Endothelial cell of umbilical vein (primary cell): ENCODE measurements at regions of chr2 and their contacts with region 1.

Region 1: DNA sequence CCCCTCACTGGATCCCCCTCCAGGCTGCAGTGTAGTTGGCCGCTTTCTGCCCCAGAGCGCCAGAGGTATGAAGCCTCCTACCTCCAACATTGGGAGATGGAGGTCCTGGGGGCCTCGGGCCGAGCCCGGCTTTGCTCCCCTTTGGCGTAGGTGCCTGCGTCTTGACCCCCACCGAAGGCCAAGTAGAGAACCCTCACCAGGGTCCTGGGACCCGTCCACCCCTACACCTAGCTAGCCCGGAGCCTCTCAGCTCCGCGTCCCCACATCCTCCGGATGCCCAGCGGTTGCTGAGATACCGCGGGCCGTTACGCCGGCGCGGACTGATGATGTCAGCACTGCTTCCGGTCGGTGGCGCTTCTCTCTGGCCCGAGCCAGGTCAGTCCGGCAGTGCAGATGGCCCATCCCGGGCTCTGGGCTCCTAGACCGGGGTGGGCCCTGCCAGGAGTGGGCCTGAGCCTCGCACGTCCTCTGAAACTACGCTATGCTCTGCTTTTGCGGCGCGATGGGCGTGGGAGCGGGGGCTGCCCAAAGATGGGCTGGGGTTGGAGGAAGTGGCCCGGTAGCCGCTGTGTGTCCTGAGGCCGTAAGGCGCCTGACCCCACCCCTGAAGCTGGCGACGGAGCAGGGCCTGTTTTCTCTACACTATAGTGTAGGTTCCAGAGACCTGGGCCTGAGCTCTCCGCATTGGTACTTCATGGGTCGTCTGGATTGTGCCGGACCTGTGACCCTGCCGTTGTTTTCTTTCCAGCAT is at the starts of genes GLB1L and STK16:
- DNase-seq: peak; percentile 91
- H3K4me3 ChIP-seq: peak within 1 kb of the TSS; percentile 67 to 80 (median 67)
- H3K27ac ChIP-seq: peak within 1 kb of the TSS; percentile 92
- H3K4me1 ChIP-seq: peaks cover 28% of the 10 kb centered on the region
- H3K27me3 ChIP-seq: no peaks in the 10 kb centered on the region
- CTCF ChIP-seq: no peak
- POLR2A ChIP-seq: peak; percentile 93
- total RNA-seq, gene GLB1L: 9.2 and 9.5 TPM in 2 replicates
- total RNA-seq, gene STK16: 18.8 and 21.1 TPM in 2 replicates

Region 2: GRCh38 chr2:219229305-219230058 is 15.8 kb before region 1 on chr2 and contains the starts of genes ANKZF1 and ATG9A:
- CTCF ChIA-PET with region 1: interaction called, 5 read pairs
- POLR2A ChIA-PET with region 1: interaction called, 7 read pairs
- dilution Hi-C with region 1: no loop called
- intact Hi-C with region 1: loop called (anchors 1 kb)
- DNase-seq: peak; percentile 100
- H3K4me3 ChIP-seq: peak within 1 kb of the TSS; percentile 70 to 76 (median 70)
- H3K27ac ChIP-seq: peak within 1 kb of the TSS; percentile 76
- H3K4me1 ChIP-seq: peaks cover 15% of the 10 kb centered on the region
- H3K27me3 ChIP-seq: no peaks in the 10 kb centered on the region
- CTCF ChIP-seq: no peak
- POLR2A ChIP-seq: peak; percentile 85
- total RNA-seq, gene ANKZF1: 34.0 and 36.2 TPM in 2 replicates
- total RNA-seq, gene ATG9A: 62.2 and 65.5 TPM in 2 replicates